ENCODE measurements at regions of chr1 and their contacts with region 1.

Region 1: GRCh38 chr1:15323351-15323988 is 76.4 kb downstream of the FHAD1 start:
- DNase-seq: no peak
- ATAC-seq: peak; percentile 98
- H3K4me3 ChIP-seq: no peak overlapping the region
- H3K27ac ChIP-seq: no peak overlapping the region
- H3K4me1 ChIP-seq: no peaks in the 10 kb centered on the region
- H3K27me3 ChIP-seq: no peaks in the 10 kb centered on the region; a peak in 1 of 4 replicates
- CTCF ChIP-seq: peak; percentile 94 to 99 (median 94)
- EP300 ChIP-seq: no peak
- POLR2A ChIP-seq: no peak
- RAD21 ChIP-seq: peak; percentile 87

Region 2: GRCh38 chr1:15368888-15369287 is 45.4 kb after region 1 on chr1:
- CTCF ChIA-PET with region 1: interaction called, 11 read pairs
- POLR2A ChIA-PET with region 1: no interaction called
- RAD21 ChIA-PET with region 1: no interaction called
- SMC1A ChIA-PET with region 1: interaction called, 3 read pairs
- in situ Hi-C with region 1: no loop called
- intact Hi-C with region 1: no loop called
- DNase-seq: no peak
- ATAC-seq: no peak
- H3K4me3 ChIP-seq: no peak overlapping the region
- H3K27ac ChIP-seq: no peak overlapping the region
- H3K4me1 ChIP-seq: no peaks in the 10 kb centered on the region
- H3K27me3 ChIP-seq: 0 out of 4 replicates have a peak, but pooled peaks cover 0 to 2% of the 10 kb centered on the region in 2 experiments
- CTCF ChIP-seq: no peak
- EP300 ChIP-seq: no peak
- POLR2A ChIP-seq: no peak
- RAD21 ChIP-seq: no peak

Region 3: GRCh38 chr1:15417365-15417934 is 94.0 kb after region 1 on chr1:
- CTCF ChIA-PET with region 1: interaction called, 14 read pairs
- POLR2A ChIA-PET with region 1: no interaction called
- RAD21 ChIA-PET with region 1: interaction called, 6 read pairs
- SMC1A ChIA-PET with region 1: interaction called, 19 read pairs
- in situ Hi-C with region 1: no loop called
- intact Hi-C with region 1: loop called (anchors 5 kb)
- DNase-seq: no peak
- ATAC-seq: peak; percentile 47
- H3K4me3 ChIP-seq: peak overlapping the region; percentile 58
- H3K27ac ChIP-seq: peak overlapping the region; percentile 91
- H3K4me1 ChIP-seq: peaks cover 47% of the 10 kb centered on the region
- H3K27me3 ChIP-seq: no peaks in the 10 kb centered on the region
- CTCF ChIP-seq: no peak
- EP300 ChIP-seq: peak in 1 of 2 experiments; percentile 82; a peak in 2 of 4 replicates
- POLR2A ChIP-seq: no peak
- RAD21 ChIP-seq: no peak

Region 4: DNA sequence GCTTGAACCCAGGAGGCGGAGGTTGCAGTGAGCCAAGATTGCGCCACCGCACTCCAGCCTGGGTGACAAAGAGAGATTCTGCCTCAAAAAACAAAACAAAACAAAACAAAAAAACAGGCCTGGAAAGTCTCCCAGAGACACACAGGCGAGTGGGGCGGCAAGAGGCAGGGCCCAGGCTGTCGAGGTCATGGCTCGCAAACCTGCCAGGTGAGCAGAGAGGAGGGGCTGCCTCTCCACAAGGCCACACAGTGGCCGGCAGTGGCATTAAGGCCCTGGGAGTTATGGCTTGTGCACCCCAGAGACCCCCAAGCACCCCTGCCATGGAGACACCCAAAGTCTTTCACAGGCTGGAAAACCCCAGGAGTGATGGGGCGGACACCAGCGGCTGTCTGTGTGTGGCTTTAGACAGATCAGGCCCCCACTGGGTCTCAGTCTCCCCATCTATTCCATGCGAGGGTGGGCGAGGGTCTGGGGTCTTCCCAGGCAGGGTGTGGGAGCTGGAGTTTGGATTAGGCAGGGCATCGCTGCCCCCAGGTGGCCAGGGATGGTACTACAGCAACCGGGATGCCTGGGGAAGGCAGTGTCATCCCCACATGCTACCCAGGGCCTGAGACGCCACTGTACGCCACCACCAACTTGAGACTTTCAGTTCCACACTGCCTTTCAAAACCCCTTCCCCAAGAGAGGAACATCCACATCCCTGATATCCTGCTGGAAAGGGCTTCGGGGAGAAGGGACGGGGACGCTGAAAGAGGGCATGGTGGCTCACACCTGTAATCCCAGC is 107.5 kb after region 1 on chr1:
- CTCF ChIA-PET with region 1: interaction called, 178 read pairs
- POLR2A ChIA-PET with region 1: interaction called, 4 read pairs
- RAD21 ChIA-PET with region 1: interaction called, 22 read pairs
- SMC1A ChIA-PET with region 1: interaction called, 64 read pairs
- in situ Hi-C with region 1: loop called (anchors 5 kb)
- intact Hi-C with region 1: loop called (anchors 1 kb)
- DNase-seq: no peak
- ATAC-seq: peak; percentile 85
- H3K4me3 ChIP-seq: no peak overlapping the region
- H3K27ac ChIP-seq: no peak overlapping the region
- H3K4me1 ChIP-seq: no peaks in the 10 kb centered on the region
- H3K27me3 ChIP-seq: no peaks in the 10 kb centered on the region
- CTCF ChIP-seq: peak; percentile 97 to 99 (median 98); a peak in 5 of 6 replicates
- EP300 ChIP-seq: no peak
- POLR2A ChIP-seq: peak; percentile 50
- RAD21 ChIP-seq: peak; percentile 85

Region 5: GRCh38 chr1:15501208-15502032 is 177.9 kb after region 1 on chr1:
- CTCF ChIA-PET with region 1: interaction called, 5 read pairs
- POLR2A ChIA-PET with region 1: interaction called, 3 read pairs
- RAD21 ChIA-PET with region 1: interaction called, 4 read pairs
- SMC1A ChIA-PET with region 1: interaction called, 5 read pairs
- in situ Hi-C with region 1: no loop called
- intact Hi-C with region 1: loop called (anchors 1 kb)
- DNase-seq: no peak
- ATAC-seq: peak; percentile 94
- H3K4me3 ChIP-seq: no peak overlapping the region
- H3K27ac ChIP-seq: no peak overlapping the region
- H3K4me1 ChIP-seq: no peaks in the 10 kb centered on the region
- H3K27me3 ChIP-seq: no peaks in the 10 kb centered on the region
- CTCF ChIP-seq: peak; percentile 69 to 80 (median 75)
- EP300 ChIP-seq: no peak
- POLR2A ChIP-seq: no peak
- RAD21 ChIP-seq: peak; percentile 69

Measured in GM12878 (cell line).